Transverse colon (tissue), 4 donors: ENCODE measurements at regions of chr2 and their contacts with region 1.

Region 1: GRCh38 chr2:62415019-62415431 is 91.0 kb downstream of the TMEM17 start:
- DNase-seq: peak; percentile 29
- H3K4me3 ChIP-seq: no peak overlapping the region
- H3K27ac ChIP-seq: peak overlapping the region in 1 of 4 donors; percentile 12
- H3K4me1 ChIP-seq: peaks cover 9 to 19% (median 13%) of the 10 kb centered on the region in 4 donors
- H3K27me3 ChIP-seq: no peaks in the 10 kb centered on the region
- CTCF ChIP-seq: no peak
- EP300 ChIP-seq: no peak
- POLR2A ChIP-seq: no peak

Region 2: DNA sequence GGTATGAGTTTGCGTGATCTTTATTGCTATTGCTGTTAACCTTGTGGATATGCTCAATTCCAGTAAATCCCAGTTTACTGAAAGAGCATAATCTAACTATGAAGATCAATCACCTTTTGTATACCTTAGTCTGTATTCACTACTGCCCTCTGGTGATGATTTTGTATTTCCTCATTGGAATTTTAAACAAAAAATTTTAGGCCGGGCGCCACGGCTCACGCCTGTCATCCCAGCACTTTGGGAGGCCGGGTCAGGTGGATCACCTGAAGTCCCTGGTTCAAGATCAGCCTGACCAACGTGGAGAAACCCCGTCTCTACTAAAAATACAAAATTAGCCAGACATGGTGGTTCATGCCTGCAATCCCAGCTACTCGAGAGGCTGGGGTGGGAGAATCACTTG is 504.4 kb before region 1 on chr2:
- in situ Hi-C with region 1: loop called in 3 of 4 experiments (anchors 5 to 10 kb)
- intact Hi-C with region 1: no loop called
- DNase-seq: no peak
- H3K4me3 ChIP-seq: no peak overlapping the region
- H3K27ac ChIP-seq: no peak overlapping the region
- H3K4me1 ChIP-seq: peaks cover 5 to 15% (median 8%) of the 10 kb centered on the region in 4 donors
- H3K27me3 ChIP-seq: no peaks in the 10 kb centered on the region
- CTCF ChIP-seq: peak in 3 of 5 experiments; percentile 17 to 25 (median 18)
- EP300 ChIP-seq: no peak
- POLR2A ChIP-seq: no peak

Region 3: GRCh38 chr2:61924895-61925663 is 489.9 kb before region 1 on chr2:
- in situ Hi-C with region 1: loop called in 1 of 4 experiments (anchors 5 kb)
- intact Hi-C with region 1: no loop called
- DNase-seq: no peak
- H3K4me3 ChIP-seq: no peak overlapping the region
- H3K27ac ChIP-seq: no peak overlapping the region
- H3K4me1 ChIP-seq: peaks cover 0 to 5% (median 0%) of the 10 kb centered on the region in 4 donors
- H3K27me3 ChIP-seq: no peaks in the 10 kb centered on the region
- CTCF ChIP-seq: no peak
- EP300 ChIP-seq: no peak
- POLR2A ChIP-seq: no peak

Region 4: GRCh38 chr2:61993444-61994024 is 421.5 kb before region 1 on chr2:
- in situ Hi-C with region 1: loop called in 3 of 4 experiments (anchors 5 to 25 kb)
- intact Hi-C with region 1: loop called (anchors 5 kb)
- DNase-seq: peak; percentile 22
- H3K4me3 ChIP-seq: no peak overlapping the region
- H3K27ac ChIP-seq: no peak overlapping the region
- H3K4me1 ChIP-seq: no peaks in the 10 kb centered on the region
- H3K27me3 ChIP-seq: no peaks in the 10 kb centered on the region
- CTCF ChIP-seq: peak; percentile 51 to 68 (median 61)
- EP300 ChIP-seq: no peak
- POLR2A ChIP-seq: no peak

Region 5: DNA sequence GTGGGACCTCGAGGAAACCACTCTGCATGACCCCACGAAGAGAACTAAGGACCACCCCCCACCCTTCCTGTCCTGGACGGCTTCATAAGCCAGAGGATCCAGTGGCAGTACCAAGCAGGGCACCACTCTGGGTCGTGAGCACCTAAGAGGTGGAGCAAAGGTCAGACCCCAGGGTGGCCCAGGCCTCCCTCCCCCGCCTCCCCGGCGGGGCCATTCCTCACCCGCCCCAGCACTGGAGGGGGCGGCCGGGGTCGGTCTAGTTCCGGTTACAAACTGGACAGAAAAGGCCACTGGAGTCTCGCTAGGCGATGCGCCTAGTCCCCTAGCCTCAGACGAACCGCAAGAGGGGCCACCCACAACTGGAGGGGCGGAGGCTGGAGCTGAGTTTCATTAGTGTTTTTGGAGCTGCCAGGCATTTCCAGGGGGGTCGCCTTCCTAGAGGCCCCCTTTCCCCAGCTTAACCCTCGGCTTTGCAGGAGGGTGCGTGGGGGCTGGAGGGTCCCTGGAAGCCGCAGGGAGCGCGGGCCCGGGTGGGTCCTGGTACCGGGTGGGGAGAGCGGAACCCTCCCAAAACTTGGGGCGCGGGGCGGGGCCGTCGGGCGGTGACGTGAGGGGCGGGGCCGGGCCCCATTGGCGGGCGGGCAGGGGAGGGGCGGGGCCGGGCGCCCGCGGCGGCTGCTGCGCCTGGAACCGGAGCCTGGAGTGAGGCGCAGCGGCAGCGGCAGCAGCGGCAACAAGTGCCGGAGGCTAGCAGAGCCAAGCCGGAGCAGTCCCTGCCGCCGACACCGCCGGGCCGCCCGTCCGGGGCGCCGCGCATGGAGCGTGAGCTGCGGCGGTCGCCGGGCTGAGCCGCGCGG is 219.4 kb before region 1 on chr2 and contains the start of gene B3GNT2:
- in situ Hi-C with region 1: loop called in 1 of 4 experiments (anchors 10 kb)
- intact Hi-C with region 1: loop called (anchors 10 kb)
- DNase-seq: peak; percentile 87
- H3K4me3 ChIP-seq: peak within 1 kb of the TSS; percentile 62 to 94 (median 78)
- H3K27ac ChIP-seq: peak within 1 kb of the TSS; percentile 91 to 98 (median 96)
- H3K4me1 ChIP-seq: peaks cover 6 to 40% (median 22%) of the 10 kb centered on the region in 4 donors
- H3K27me3 ChIP-seq: no peaks in the 10 kb centered on the region
- CTCF ChIP-seq: no peak
- EP300 ChIP-seq: no peak
- POLR2A ChIP-seq: peak; percentile 28
- total RNA-seq, gene B3GNT2: 28.1 to 41.6 (median 38.4) TPM

Region 6: DNA sequence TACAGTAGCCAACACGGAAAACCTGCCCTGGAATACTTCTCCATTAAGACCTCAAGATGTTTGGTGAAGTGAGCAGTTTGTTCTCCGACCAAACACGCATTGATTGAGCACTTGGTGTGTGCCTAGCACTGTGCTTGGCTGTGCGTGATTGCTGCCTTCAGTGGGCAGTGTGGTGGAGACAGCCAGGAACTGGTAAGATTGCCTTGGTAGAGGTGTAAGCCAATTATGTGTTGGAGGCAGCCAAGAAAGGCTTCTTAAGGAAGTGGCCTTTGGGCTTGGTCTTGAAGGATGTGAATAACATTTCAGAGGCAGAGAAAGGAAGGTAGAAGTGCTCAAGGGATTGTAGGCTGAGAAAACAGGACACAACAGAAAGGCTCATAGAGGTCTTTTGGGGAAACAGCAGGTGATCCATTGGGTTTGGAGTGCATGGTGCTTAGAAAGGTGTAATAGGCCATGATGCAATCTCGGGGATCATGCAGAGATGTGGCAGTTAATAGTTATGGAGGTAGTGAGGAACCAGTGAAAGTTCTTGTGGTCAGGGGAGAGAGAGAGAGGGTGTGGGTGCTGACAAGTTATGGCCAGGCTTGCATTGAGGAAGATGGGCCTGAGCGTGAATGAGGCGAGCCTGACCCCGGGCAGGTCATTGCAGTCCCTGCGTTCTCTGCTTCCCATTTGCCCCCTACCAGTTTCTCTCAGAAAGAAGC is 212.9 kb before region 1 on chr2:
- in situ Hi-C with region 1: loop called in 1 of 4 experiments (anchors 10 kb)
- intact Hi-C with region 1: loop called (anchors 10 kb)
- DNase-seq: no peak
- H3K4me3 ChIP-seq: no peak overlapping the region
- H3K27ac ChIP-seq: no peak overlapping the region
- H3K4me1 ChIP-seq: peaks cover 6 to 59% (median 17%) of the 10 kb centered on the region in 4 donors
- H3K27me3 ChIP-seq: no peaks in the 10 kb centered on the region
- CTCF ChIP-seq: no peak
- EP300 ChIP-seq: no peak
- POLR2A ChIP-seq: no peak

Region 7: GRCh38 chr2:62435720-62436119 is 20.7 kb after region 1 on chr2:
- in situ Hi-C with region 1: no loop called
- intact Hi-C with region 1: no loop called
- DNase-seq: no peak
- H3K4me3 ChIP-seq: no peak overlapping the region
- H3K27ac ChIP-seq: no peak overlapping the region
- H3K4me1 ChIP-seq: no peaks in the 10 kb centered on the region
- H3K27me3 ChIP-seq: no peaks in the 10 kb centered on the region
- CTCF ChIP-seq: no peak
- EP300 ChIP-seq: no peak
- POLR2A ChIP-seq: no peak

Region 8: GRCh38 chr2:62604336-62604735 is 189.3 kb after region 1 on chr2:
- in situ Hi-C with region 1: no loop called
- intact Hi-C with region 1: no loop called
- DNase-seq: no peak
- H3K4me3 ChIP-seq: no peak overlapping the region
- H3K27ac ChIP-seq: no peak overlapping the region
- H3K4me1 ChIP-seq: no peaks in the 10 kb centered on the region
- H3K27me3 ChIP-seq: no peaks in the 10 kb centered on the region
- CTCF ChIP-seq: no peak
- EP300 ChIP-seq: no peak
- POLR2A ChIP-seq: no peak